Calu3 (cell line): ENCODE measurements at regions of chr16 and their contacts with region 1.

Region 1: GRCh38 chr16:90057738-90058173 is 19.4 kb downstream of the PRDM7 start:
- DNase-seq: no peak
- H3K4me3 Mint-ChIP-seq: no peak overlapping the region
- H3K27ac Mint-ChIP-seq: no peak overlapping the region
- H3K4me1 Mint-ChIP-seq: peaks cover 10% of the 10 kb centered on the region
- H3K27me3 Mint-ChIP-seq: peaks cover 52% of the 10 kb centered on the region
- CTCF ChIP-seq: no peak

Region 2: GRCh38 chr16:90077226-90077756 is 19.5 kb after region 1 on chr16 and contains the start of gene PRDM7:
- CTCF ChIA-PET with region 1: no interaction called
- intact Hi-C with region 1: loop called (anchors 2 kb)
- DNase-seq: peak; percentile 99
- H3K4me3 Mint-ChIP-seq: peak within 1 kb of the TSS; percentile 62
- H3K27ac Mint-ChIP-seq: peak within 1 kb of the TSS; percentile 72
- H3K4me1 Mint-ChIP-seq: peaks cover 25% of the 10 kb centered on the region
- H3K27me3 Mint-ChIP-seq: peaks cover 30% of the 10 kb centered on the region
- CTCF ChIP-seq: no peak
- total RNA-seq, gene PRDM7: not detected in 2 replicates